Activated CD4-positive, alpha-beta T cell treated with anti-CD3 and anti-CD28 coated beads, Interleukin-2, amount 10 ng/mL, durations not matched to agents 24 days and 14 days (primary cell): ENCODE measurements at regions of chr2 and their contacts with region 1.

Region 1: DNA sequence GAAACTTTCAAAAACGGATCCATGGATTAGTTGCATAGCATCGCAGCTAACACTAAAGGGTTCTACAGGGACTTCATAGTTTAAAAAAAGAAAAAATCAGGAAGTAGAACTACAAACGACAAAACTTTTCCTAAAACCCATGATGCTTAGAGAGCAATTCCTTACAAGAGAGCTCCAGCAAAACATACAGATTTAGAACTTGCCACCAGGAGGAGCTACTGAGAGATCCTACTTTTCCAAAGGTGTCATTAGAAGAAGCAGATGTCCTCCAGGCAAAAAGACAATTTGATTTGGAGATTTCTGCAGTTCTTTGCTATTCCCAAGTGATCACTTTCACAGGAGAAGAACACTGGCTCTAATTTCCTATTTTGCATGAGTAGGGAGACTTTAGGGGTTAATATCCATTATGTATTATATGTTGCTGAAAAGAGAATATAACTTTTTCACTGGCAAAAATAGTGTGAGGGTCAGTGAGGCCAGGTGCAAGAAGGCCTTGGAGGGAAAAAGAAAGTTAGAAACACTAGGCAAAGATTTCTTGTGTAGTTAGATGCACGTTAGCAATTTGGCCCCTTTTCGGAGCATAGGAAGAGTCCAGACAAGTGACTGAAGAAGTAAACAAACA is 436.2 kb downstream of the SUCLG1 start:
- DNase-seq: peak; percentile 72
- H3K4me3 Mint-ChIP-seq: no peak overlapping the region
- H3K27ac Mint-ChIP-seq: no peak overlapping the region
- H3K4me1 Mint-ChIP-seq: no peaks in the 10 kb centered on the region
- H3K27me3 Mint-ChIP-seq: no peaks in the 10 kb centered on the region

Region 2: DNA sequence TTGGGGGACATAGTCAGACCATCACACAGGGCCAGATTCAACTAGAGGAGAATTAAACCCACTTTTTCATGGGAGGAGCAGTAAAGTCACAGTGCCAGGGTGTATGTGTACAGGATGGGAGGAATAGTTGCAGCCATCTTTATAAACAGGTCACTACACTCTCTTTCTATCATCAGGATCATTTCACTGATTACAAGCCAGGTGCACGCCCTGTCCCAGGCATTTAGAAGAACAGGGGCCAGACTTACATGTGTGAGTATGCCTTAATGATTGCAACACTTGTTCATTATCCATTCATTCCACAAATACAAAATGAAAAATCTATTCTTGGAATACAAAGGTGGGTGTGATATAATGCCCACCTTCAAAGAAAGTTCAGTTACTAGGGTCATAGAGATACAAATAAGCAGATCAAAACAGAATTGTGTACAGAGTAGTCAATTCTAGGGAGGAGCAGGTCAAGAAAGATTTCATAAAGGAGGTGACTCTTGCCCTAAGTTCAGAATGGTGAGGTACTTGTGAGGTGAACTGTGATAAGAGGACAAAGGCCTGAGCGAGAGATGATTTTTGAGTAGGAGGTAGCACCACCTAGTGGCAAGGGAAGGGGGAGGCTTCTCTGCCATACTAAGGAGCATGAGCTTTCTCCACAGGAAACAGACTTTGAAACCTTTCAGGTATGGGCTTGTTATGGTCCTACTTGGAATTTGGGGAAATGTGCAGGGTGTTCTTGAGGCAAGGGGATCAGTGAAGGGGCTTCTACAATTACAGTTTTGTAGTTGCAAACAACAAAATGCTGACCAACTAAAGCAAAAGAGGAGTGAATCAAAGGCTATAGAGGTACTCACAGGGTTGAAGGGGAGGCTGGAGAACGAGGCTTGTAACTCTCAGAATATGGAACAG is 279.8 kb after region 1 on chr2:
- intact Hi-C with region 1: loop called (anchors 2 kb)
- DNase-seq: peak; percentile 83
- H3K4me3 Mint-ChIP-seq: no peak overlapping the region
- H3K27ac Mint-ChIP-seq: no peak overlapping the region
- H3K4me1 Mint-ChIP-seq: no peaks in the 10 kb centered on the region
- H3K27me3 Mint-ChIP-seq: no peaks in the 10 kb centered on the region

Region 3: GRCh38 chr2:84314901-84315330 is 292.0 kb after region 1 on chr2:
- intact Hi-C with region 1: loop called (anchors 1 kb)
- DNase-seq: peak; percentile 93
- H3K4me3 Mint-ChIP-seq: no peak overlapping the region
- H3K27ac Mint-ChIP-seq: no peak overlapping the region
- H3K4me1 Mint-ChIP-seq: no peaks in the 10 kb centered on the region
- H3K27me3 Mint-ChIP-seq: peaks cover 9% of the 10 kb centered on the region